Activated CD4-positive, alpha-beta T cell treated with anti-CD3 and anti-CD28 coated beads, Interleukin-2, amount 10 ng/mL, durations not matched to agents 24 days and 14 days (primary cell): ENCODE measurements at regions of chr12 and their contacts with region 1.

Region 1: GRCh38 chr12:118357257-118358007 is 15.3 kb downstream of the TAOK3 start:
- DNase-seq: peak; percentile 80
- H3K4me3 Mint-ChIP-seq: peak overlapping the region; percentile 95
- H3K27ac Mint-ChIP-seq: peak overlapping the region; percentile 93
- H3K4me1 Mint-ChIP-seq: peaks cover 38% of the 10 kb centered on the region
- H3K27me3 Mint-ChIP-seq: no peaks in the 10 kb centered on the region

Region 2: GRCh38 chr12:118183705-118184104 is 173.7 kb before region 1 on chr12:
- intact Hi-C with region 1: loop called (anchors 5 kb)
- DNase-seq: no peak
- H3K4me3 Mint-ChIP-seq: no peak overlapping the region
- H3K27ac Mint-ChIP-seq: no peak overlapping the region
- H3K4me1 Mint-ChIP-seq: peaks cover 8% of the 10 kb centered on the region
- H3K27me3 Mint-ChIP-seq: no peaks in the 10 kb centered on the region

Region 3: DNA sequence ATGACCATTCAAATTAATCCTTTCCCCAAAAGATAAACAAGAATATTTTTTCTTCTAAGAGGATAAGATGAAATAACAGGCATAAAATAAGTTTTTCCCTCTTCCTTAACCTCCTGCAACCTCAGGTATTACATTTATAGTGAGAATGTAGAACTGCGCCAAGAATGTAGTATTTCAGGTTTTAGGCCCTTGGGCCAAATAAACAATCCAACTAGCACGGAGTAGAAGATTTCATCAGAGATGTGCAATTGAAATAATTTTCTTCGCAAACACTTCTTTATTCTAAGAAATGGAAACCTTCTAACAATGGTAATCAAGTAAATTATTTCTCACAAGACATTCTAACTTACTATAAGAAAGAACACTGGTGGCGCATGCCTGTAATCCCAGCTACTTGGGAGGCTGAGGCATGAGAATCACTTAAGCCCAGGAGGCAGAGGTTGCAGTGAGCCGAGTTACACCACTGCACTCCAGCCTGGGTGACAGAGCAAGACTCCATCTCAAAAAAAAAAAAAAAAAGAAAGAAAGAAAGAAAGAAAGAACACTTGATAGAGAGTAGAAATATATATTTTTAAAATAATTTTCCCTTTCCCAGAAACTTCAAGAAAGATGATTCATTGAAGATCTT is 85.5 kb before region 1 on chr12:
- intact Hi-C with region 1: no loop called
- DNase-seq: no peak
- H3K4me3 Mint-ChIP-seq: no peak overlapping the region
- H3K27ac Mint-ChIP-seq: no peak overlapping the region
- H3K4me1 Mint-ChIP-seq: peaks cover 4% of the 10 kb centered on the region
- H3K27me3 Mint-ChIP-seq: no peaks in the 10 kb centered on the region

Region 4: GRCh38 chr12:118307069-118307954 is 50.1 kb before region 1 on chr12:
- intact Hi-C with region 1: loop called (anchors 1 kb)
- DNase-seq: peak; percentile 61
- H3K4me3 Mint-ChIP-seq: peak overlapping the region; percentile 62
- H3K27ac Mint-ChIP-seq: peak overlapping the region; percentile 82
- H3K4me1 Mint-ChIP-seq: peaks cover 21% of the 10 kb centered on the region
- H3K27me3 Mint-ChIP-seq: no peaks in the 10 kb centered on the region

Region 5: DNA sequence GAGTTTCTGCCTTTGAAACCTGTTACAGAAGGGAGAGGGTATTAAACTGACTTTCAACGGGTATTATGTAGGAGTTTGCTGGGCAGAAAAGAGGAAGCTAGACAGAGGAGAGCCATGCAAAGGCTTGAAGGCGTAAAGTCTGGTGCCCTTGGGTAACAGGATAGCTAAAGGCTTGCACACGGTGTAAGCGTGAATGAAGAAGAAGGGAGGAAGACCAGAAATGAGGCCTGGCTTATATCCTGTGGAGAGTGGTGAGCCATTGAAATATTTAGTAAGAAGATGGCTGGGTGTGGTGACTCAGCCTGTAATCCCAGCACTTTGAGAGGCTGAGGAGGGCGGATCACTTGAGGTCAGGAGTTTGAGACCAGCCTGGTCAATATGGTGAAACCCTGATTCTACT is 41.5 kb after region 1 on chr12:
- intact Hi-C with region 1: no loop called
- DNase-seq: no peak
- H3K4me3 Mint-ChIP-seq: no peak overlapping the region
- H3K27ac Mint-ChIP-seq: no peak overlapping the region
- H3K4me1 Mint-ChIP-seq: peaks cover 3% of the 10 kb centered on the region
- H3K27me3 Mint-ChIP-seq: no peaks in the 10 kb centered on the region